Mammary epithelial cell (primary cell): ENCODE measurements at regions of chr6 and their contacts with region 1.

Region 1: GRCh38 chr6:136289579-136290409 is at the start of gene BCLAF1:
- DNase-seq: peak; percentile 98
- H3K4me3 ChIP-seq: peak within 1 kb of the TSS; percentile 87 to 97 (median 95)
- H3K27ac ChIP-seq: peak within 1 kb of the TSS; percentile 100
- H3K4me1 ChIP-seq: peaks cover 17% of the 10 kb centered on the region
- H3K27me3 ChIP-seq: no peaks in the 10 kb centered on the region
- CTCF ChIP-seq: no peak
- total RNA-seq, gene BCLAF1: 104 to 143 TPM

Region 2: GRCh38 chr6:136249811-136250685 is 39.7 kb before region 1 on chr6 and contains the start of gene MTFR2:
- CTCF ChIA-PET with region 1: no interaction called
- dilution Hi-C with region 1: loop called (anchors 5 kb)
- in situ Hi-C with region 1: no loop called
- intact Hi-C with region 1: loop called (anchors 5 kb)
- DNase-seq: peak; percentile 99
- H3K4me3 ChIP-seq: peak within 1 kb of the TSS; percentile 78 to 98 (median 90)
- H3K27ac ChIP-seq: peak within 1 kb of the TSS; percentile 76
- H3K4me1 ChIP-seq: peaks cover 6% of the 10 kb centered on the region
- H3K27me3 ChIP-seq: no peaks in the 10 kb centered on the region
- CTCF ChIP-seq: no peak
- total RNA-seq, gene MTFR2: 2.0 to 7.3 TPM

Region 3: GRCh38 chr6:136334853-136335252 is 45.1 kb after region 1 on chr6:
- CTCF ChIA-PET with region 1: no interaction called
- dilution Hi-C with region 1: loop called (anchors 5 kb)
- in situ Hi-C with region 1: no loop called
- intact Hi-C with region 1: no loop called
- DNase-seq: no peak
- H3K4me3 ChIP-seq: no peak overlapping the region
- H3K27ac ChIP-seq: no peak overlapping the region
- H3K4me1 ChIP-seq: no peaks in the 10 kb centered on the region
- H3K27me3 ChIP-seq: no peaks in the 10 kb centered on the region
- CTCF ChIP-seq: no peak